ENCODE measurements at regions of chr19 and their contacts with region 1.

Region 1: DNA sequence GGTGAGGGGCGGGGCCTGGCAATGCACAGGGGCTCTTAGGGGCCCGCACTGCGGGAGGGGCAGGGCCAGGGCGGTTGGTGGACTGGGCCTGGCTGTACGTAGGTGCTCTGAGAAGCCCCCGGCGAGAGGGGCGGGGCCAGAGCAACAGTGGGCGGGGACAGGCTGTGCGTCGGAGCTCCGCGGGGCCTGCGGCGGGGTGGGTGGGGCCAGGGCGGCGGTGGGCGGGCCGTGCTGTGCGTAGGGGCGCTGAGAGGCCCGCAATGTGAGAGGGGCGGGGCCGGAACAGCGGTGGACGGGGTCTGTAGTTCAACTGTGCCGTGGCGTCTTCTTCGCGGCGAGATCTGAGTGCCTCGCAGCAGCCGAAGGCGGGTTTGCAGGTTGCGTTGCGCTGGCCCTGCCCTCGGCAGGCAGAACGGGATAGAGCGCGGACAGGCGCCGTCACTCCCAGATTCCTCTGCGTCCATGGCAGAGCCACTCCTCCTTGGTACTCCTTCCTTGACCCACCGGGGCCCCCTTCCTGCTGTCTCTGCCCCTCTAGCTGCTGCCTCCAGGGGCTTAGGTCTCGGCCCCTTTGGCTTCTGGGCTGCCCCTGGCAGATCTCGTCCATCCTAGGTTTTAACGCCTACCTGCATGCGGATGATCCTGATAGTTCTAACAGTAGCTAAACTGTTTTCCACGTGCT is 33.2 kb downstream of the CCNE1 start:
- DNase-seq: peak; percentile 94 to 99 (median 96)
- ATAC-seq: peak; percentile 86
- H3K4me3 ChIP-seq: peak overlapping the region; percentile 97
- H3K4me3 Mint-ChIP-seq: peak overlapping the region; percentile 87 to 98 (median 92)
- H3K27ac ChIP-seq: peak overlapping the region; percentile 92
- H3K27ac Mint-ChIP-seq: peak overlapping the region; percentile 83 to 97 (median 91)
- H3K4me1 ChIP-seq: peaks cover 9 to 17% of the 10 kb centered on the region in 2 donors
- H3K4me1 Mint-ChIP-seq: peaks cover 11 to 19% (median 14%) of the 10 kb centered on the region in 7 donors
- H3K27me3 ChIP-seq: no peaks in the 10 kb centered on the region
- H3K27me3 Mint-ChIP-seq: peaks cover 0 to 1% (median 0%) of the 10 kb centered on the region in 5 donors

Region 2: GRCh38 chr19:29671393-29672160 is 173.5 kb before region 1 on chr19:
- CTCF ChIA-PET with region 1: no interaction called
- POLR2A ChIA-PET with region 1: interaction called, 4 read pairs
- intact Hi-C with region 1: loop called in 1 of 2 experiments (anchors 2 kb)
- DNase-seq: peak in 8 of 9 donors; percentile 65 to 83 (median 76)
- ATAC-seq: peak; percentile 72
- H3K4me3 ChIP-seq: peak overlapping the region; percentile 50
- H3K4me3 Mint-ChIP-seq: peak overlapping the region; percentile 78 to 93 (median 82)
- H3K27ac ChIP-seq: peak overlapping the region; percentile 94
- H3K27ac Mint-ChIP-seq: peak overlapping the region; percentile 90 to 100 (median 98)
- H3K4me1 ChIP-seq: peaks cover 95 to 96% of the 10 kb centered on the region in 2 donors
- H3K4me1 Mint-ChIP-seq: peaks cover 60 to 96% (median 83%) of the 10 kb centered on the region in 7 donors
- H3K27me3 ChIP-seq: no peaks in the 10 kb centered on the region
- H3K27me3 Mint-ChIP-seq: no peaks in the 10 kb centered on the region

Region 3: DNA sequence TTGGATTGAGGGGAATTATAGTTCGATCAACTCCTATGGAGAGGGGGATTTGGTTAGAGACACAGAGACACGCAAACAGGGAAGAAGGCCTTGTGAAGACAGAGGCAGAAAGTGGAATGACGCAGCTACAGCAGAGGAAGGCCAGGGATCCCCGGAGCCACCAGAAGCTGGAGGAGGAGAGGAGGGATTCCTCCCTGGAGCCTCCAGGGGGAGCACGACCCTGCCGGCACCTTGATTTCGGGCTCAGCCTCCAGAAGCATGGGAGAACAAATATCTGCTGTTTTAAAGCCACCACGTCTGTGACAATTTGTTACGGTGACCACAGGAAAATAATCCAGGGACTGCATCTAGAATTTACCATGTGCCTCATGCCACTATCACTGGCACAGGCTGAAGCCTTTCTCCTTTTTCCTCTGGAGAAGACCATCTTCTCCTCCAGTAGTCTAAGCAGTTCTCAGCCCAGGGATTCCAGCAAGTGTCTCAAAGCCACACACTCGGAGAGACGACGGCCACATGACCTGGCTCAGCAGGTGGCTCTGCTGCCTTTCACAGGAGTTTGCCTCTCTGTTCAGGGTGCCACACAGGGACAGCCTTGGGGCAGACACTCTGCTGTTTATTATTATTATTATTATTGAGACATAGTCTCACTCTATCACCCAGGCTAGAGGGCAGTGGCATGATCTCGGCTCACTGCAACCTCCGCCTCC is 73.2 kb before region 1 on chr19:
- CTCF ChIA-PET with region 1: no interaction called
- POLR2A ChIA-PET with region 1: interaction called, 5 read pairs
- intact Hi-C with region 1: loop called in 1 of 2 experiments (anchors 1 kb)
- DNase-seq: peak in 5 of 9 donors; percentile 16 to 31 (median 21)
- ATAC-seq: no peak
- H3K4me3 ChIP-seq: no peak overlapping the region
- H3K4me3 Mint-ChIP-seq: no peak overlapping the region
- H3K27ac ChIP-seq: no peak overlapping the region
- H3K27ac Mint-ChIP-seq: no peak overlapping the region
- H3K4me1 ChIP-seq: no peaks in the 10 kb centered on the region
- H3K4me1 Mint-ChIP-seq: peaks cover 0 to 8% (median 0%) of the 10 kb centered on the region in 7 donors
- H3K27me3 ChIP-seq: no peaks in the 10 kb centered on the region
- H3K27me3 Mint-ChIP-seq: no peaks in the 10 kb centered on the region

Region 4: DNA sequence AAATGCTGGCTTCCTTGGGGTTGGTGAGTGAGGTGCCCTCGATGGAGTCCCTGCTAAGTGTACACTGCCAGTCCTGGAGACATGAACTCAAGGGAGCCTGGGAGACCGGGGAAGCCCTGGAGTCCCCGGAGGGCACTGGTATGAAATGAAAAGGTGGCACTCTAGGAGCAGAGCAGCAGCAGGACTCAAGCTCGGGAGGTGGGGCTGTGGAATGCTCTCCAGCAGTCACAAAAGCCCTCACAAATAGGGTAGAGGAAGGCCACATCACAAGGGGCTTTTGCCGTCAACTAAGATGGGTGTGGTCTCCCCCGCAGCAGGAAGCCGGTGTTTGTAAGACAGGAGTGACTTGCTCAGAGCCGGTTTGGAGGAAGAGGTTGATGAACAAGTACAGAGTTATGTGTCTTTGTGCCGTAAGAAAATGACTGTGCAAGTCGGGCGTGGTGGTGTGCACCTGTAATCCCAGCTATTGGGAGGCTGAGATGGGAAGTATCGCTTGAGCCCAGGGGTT is 13.9 kb before region 1 on chr19:
- CTCF ChIA-PET with region 1: interaction called, 9 read pairs
- POLR2A ChIA-PET with region 1: interaction called, 95 read pairs
- intact Hi-C with region 1: loop called (anchors 1 kb)
- DNase-seq: peak; percentile 23 to 90 (median 86)
- ATAC-seq: peak; percentile 98
- H3K4me3 ChIP-seq: peak overlapping the region; percentile 32
- H3K4me3 Mint-ChIP-seq: peak overlapping the region; percentile 79 to 88 (median 81)
- H3K27ac ChIP-seq: peak overlapping the region; percentile 81
- H3K27ac Mint-ChIP-seq: peak overlapping the region; percentile 96 to 100 (median 98)
- H3K4me1 ChIP-seq: peaks cover 13 to 41% of the 10 kb centered on the region in 2 donors
- H3K4me1 Mint-ChIP-seq: peaks cover 31 to 56% (median 52%) of the 10 kb centered on the region in 7 donors
- H3K27me3 ChIP-seq: no peaks in the 10 kb centered on the region
- H3K27me3 Mint-ChIP-seq: no peaks in the 10 kb centered on the region

Region 5: GRCh38 chr19:29873024-29873800 is 28.2 kb after region 1 on chr19:
- CTCF ChIA-PET with region 1: interaction called, 3 read pairs
- POLR2A ChIA-PET with region 1: no interaction called
- intact Hi-C with region 1: loop called (anchors 1 kb)
- DNase-seq: peak; percentile 41 to 84 (median 63)
- ATAC-seq: peak; percentile 82
- H3K4me3 ChIP-seq: peak overlapping the region; percentile 35
- H3K4me3 Mint-ChIP-seq: peak overlapping the region; percentile 55 to 84 (median 76)
- H3K27ac ChIP-seq: peak overlapping the region; percentile 14
- H3K27ac Mint-ChIP-seq: no peak overlapping the region
- H3K4me1 ChIP-seq: no peaks in the 10 kb centered on the region
- H3K4me1 Mint-ChIP-seq: peaks cover 0 to 15% (median 9%) of the 10 kb centered on the region in 7 donors
- H3K27me3 ChIP-seq: no peaks in the 10 kb centered on the region
- H3K27me3 Mint-ChIP-seq: peaks cover 6 to 25% (median 14%) of the 10 kb centered on the region in 5 donors

Region 6: DNA sequence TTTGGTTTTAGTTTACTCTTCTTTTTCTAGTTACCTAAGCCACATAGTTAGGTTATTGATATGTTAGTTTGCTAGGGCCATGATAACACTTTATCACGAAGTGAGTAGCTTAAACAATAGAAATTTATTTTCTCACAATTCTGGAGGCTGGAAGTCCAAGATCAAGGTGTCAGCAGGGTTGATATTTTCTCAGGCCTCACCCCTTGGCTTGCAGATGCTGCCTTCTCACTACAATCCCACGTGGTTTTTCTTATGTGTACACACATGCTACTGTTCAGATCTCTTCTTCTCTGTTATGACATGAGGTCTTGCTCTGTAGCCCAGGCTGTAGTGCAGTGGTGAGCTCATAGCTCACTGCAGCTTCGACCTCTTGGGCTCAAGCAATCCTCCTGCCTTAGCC is 89.2 kb after region 1 on chr19:
- CTCF ChIA-PET with region 1: no interaction called
- POLR2A ChIA-PET with region 1: no interaction called
- intact Hi-C with region 1: no loop called
- DNase-seq: no peak
- ATAC-seq: no peak
- H3K4me3 ChIP-seq: no peak overlapping the region
- H3K4me3 Mint-ChIP-seq: no peak overlapping the region
- H3K27ac ChIP-seq: no peak overlapping the region
- H3K27ac Mint-ChIP-seq: no peak overlapping the region
- H3K4me1 ChIP-seq: no peaks in the 10 kb centered on the region
- H3K4me1 Mint-ChIP-seq: no peaks in the 10 kb centered on the region
- H3K27me3 ChIP-seq: no peaks in the 10 kb centered on the region
- H3K27me3 Mint-ChIP-seq: peaks cover 0 to 13% (median 5%) of the 10 kb centered on the region in 5 donors